ENCODE measurements at regions of chr5 and their contacts with region 1.

Region 1: GRCh38 chr5:157948738-157949410 is 89.9 kb upstream of the CLINT1 start:
- DNase-seq: peak; percentile 80
- H3K4me3 Mint-ChIP-seq: no peak overlapping the region
- H3K27ac Mint-ChIP-seq: no peak overlapping the region
- H3K4me1 Mint-ChIP-seq: peaks cover 5% of the 10 kb centered on the region
- H3K27me3 Mint-ChIP-seq: peaks cover 16% of the 10 kb centered on the region

Region 2: DNA sequence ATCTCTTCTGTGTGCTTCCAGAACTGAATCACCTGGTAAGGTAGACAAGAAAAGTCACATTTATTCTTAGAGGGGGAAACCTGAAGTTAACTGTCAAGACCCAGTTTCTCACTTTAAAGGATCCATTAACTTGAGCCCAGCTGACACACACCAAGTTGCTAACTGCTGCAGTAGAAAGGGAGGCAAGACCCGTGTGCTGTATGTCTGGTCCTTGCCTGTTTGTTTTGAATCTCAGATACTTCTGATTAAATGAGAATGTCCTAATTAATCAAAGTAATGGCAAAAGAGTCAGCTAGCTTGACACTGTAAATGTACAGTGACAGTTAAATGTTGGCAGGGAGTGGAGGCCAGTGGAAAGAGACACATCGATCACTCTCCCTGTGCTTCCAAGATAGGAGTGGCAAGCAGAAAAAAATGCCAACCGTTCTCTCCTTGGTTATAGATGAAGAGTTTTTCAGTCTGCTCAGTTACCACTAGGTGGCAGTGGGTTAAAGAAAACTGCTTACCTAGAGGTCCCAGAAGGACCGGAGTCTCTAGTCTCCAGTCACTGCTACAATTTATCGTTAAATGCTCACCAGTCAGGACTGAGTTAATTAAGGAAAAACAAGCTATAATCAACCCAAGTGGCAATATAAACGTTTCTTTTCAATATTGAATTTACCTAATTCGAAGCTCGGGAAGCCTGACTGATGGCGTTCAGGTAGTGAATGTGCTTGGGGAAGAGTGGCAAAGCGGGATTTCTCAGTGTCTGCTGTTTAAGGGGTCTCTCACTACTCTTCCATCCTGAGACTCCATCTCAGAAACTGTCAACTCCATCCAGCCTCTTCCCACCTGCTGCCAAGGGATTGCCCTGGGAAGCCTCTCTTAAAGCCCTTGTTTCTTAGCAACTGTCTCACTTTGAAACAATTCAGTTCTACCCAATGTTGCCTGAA is 186.9 kb before region 1 on chr5:
- CTCF ChIA-PET with region 1: interaction called, 58 read pairs
- POLR2A ChIA-PET with region 1: no interaction called
- DNase-seq: no peak
- H3K4me3 Mint-ChIP-seq: no peak overlapping the region
- H3K27ac Mint-ChIP-seq: no peak overlapping the region
- H3K4me1 Mint-ChIP-seq: peaks cover 14% of the 10 kb centered on the region
- H3K27me3 Mint-ChIP-seq: no peaks in the 10 kb centered on the region

Region 3: DNA sequence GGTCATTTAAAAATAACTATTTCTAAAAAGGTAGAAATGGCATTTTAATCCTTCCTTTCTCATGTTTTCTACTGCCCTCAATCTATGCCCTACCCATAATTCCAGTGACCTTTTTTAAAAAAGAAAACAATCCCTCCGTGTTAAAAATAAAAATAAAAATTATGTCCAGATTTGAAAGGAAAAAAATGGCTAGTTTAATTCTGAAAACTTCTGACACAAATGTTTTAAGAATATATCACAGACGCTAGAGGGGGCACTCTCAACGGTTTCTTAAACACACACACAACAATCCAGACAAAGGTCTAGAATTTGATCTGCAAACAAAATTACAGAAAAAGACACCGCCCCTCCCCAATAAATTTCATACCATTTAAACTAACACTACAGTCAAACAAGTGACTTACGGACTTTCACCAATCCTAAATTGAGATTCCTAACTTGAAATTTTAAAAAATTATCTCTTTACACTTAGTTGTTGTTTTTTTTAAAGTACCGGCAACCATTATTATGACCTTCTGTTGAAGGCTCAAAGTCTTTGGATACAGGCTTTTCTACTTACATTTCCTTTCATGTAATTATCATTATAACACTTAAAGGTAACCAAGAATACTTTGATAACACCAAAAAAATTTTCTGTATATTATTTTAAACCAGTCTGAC is 128.2 kb before region 1 on chr5:
- CTCF ChIA-PET with region 1: interaction called, 87 read pairs
- POLR2A ChIA-PET with region 1: no interaction called
- DNase-seq: no peak
- H3K4me3 Mint-ChIP-seq: no peak overlapping the region
- H3K27ac Mint-ChIP-seq: no peak overlapping the region
- H3K4me1 Mint-ChIP-seq: peaks cover 17% of the 10 kb centered on the region
- H3K27me3 Mint-ChIP-seq: no peaks in the 10 kb centered on the region

Region 4: DNA sequence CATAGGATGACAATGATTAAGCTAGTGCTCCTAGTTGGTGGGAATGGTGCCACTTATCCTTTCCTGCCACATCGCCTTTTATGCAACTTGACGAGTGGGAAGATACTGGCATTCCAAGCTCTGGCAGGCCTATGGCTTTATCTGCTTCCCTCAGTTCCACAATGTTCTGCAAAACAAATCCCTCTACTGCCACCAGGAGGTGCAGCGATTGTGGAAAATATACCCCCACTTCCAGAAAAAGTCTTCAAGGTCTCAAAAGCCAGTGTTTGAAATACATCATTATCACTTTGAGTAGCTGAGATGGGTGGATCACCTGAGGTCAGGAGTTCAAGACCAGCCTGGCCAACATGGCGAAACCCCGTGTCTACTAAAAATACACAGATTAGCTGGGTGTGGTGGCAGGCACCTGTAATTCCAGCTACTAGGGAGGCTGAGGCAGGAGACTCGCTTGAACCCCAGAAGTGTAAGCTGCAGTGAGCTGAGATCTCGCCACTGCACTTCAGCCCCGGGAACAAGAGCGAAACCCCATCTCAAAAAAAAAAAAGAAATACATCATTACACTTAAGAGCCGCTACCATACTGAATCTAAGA is 93.4 kb before region 1 on chr5:
- CTCF ChIA-PET with region 1: interaction called, 30 read pairs
- POLR2A ChIA-PET with region 1: interaction called, 5 read pairs
- DNase-seq: peak; percentile 22
- H3K4me3 Mint-ChIP-seq: no peak overlapping the region
- H3K27ac Mint-ChIP-seq: no peak overlapping the region
- H3K4me1 Mint-ChIP-seq: peaks cover 61% of the 10 kb centered on the region
- H3K27me3 Mint-ChIP-seq: no peaks in the 10 kb centered on the region

Region 5: DNA sequence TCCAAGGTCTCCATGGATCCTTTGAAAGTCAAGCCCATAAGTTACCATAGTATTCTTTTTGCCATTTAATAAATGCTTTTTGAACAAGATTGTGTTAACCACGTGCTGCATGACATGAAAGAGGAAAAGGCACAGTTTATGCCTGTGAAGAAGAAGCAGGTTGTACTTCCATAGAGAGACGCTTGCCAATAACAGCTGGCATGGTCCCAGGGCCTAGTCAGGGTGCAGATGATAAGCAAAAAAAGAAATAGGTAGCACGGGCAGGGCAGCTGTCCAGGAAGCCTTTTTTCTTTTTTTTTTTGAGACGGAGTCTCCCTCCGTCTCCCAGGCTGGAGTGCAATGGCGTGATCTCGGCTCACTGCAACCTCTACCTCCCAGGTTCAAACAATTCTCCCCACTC is 18.2 kb before region 1 on chr5:
- CTCF ChIA-PET with region 1: interaction called, 25 read pairs
- POLR2A ChIA-PET with region 1: no interaction called
- DNase-seq: no peak
- H3K4me3 Mint-ChIP-seq: no peak overlapping the region
- H3K27ac Mint-ChIP-seq: no peak overlapping the region
- H3K4me1 Mint-ChIP-seq: peaks cover 3% of the 10 kb centered on the region
- H3K27me3 Mint-ChIP-seq: peaks cover 8% of the 10 kb centered on the region

Region 6: DNA sequence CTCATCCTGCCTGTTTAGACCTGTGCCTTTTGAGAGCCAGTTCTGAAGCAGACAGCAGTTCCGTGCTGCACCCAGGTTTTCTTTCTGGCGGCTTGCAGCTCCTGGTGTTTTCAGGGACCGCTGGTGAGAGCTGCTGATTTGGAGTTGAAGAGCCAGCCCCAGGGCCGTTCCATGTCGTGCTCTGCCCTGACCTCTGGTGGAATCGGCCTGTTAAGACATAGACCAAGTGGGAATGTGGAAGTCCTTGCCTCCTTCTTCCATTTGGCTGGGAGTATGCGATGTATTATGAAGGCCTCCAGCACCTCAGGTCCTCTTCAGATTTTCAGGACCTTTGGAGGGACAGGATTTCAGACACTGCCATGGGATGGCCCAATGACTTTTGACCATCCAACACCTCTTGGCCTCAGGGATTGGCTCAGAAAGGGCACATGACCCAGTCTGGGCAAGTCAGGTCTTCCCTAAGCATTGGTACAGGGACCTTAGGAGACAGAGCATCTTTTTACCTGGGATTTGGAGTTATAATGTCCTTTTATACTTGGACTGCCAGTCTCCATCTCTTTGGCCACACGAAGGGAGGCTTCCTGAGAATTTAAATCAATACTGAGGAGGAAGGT is 46.1 kb after region 1 on chr5:
- CTCF ChIA-PET with region 1: interaction called, 22 read pairs
- POLR2A ChIA-PET with region 1: no interaction called
- DNase-seq: peak; percentile 58
- H3K4me3 Mint-ChIP-seq: peak overlapping the region; percentile 49
- H3K27ac Mint-ChIP-seq: no peak overlapping the region
- H3K4me1 Mint-ChIP-seq: peaks cover 20% of the 10 kb centered on the region
- H3K27me3 Mint-ChIP-seq: peaks cover 44% of the 10 kb centered on the region